A549 (cell line): ENCODE measurements at regions of chr19 and their contacts with region 1.

Region 1: GRCh38 chr19:49877020-49877878 is at the starts of genes AKT1S1 and TBC1D17:
- DNase-seq: peak; percentile 100
- ATAC-seq: peak; percentile 66 to 82
- H3K4me3 ChIP-seq: peak within 1 kb of the TSS; percentile 95
- H3K27ac ChIP-seq: peak within 1 kb of the TSS; percentile 98 to 99
- H3K4me1 ChIP-seq: peaks cover 21% of the 10 kb centered on the region
- CTCF ChIP-seq: no peak
- EP300 ChIP-seq: no peak; a peak in 1 of 5 replicates
- POLR2A ChIP-seq: peak; percentile 70
- RAD21 ChIP-seq: no peak
- polyA plus RNA-seq, gene AKT1S1: 39.2 and 41.5 TPM in 2 replicates
- polyA plus RNA-seq, gene TBC1D17: 12.3 and 18.0 TPM in 2 replicates

Region 2: GRCh38 chr19:49850473-49851342 is 26.5 kb before region 1 on chr19 and contains the start of gene PTOV1:
- CTCF ChIA-PET with region 1: no interaction called
- POLR2A ChIA-PET with region 1: interaction called, 10 read pairs
- DNase-seq: peak; percentile 96 to 97
- ATAC-seq: peak; percentile 76 to 84
- H3K4me3 ChIP-seq: peak within 1 kb of the TSS; percentile 89
- H3K27ac ChIP-seq: peak within 1 kb of the TSS; percentile 94 to 97
- H3K4me1 ChIP-seq: peaks cover 17% of the 10 kb centered on the region
- CTCF ChIP-seq: no peak
- EP300 ChIP-seq: no peak
- POLR2A ChIP-seq: peak; percentile 44
- RAD21 ChIP-seq: no peak; a peak in 1 of 5 replicates
- polyA plus RNA-seq, gene PTOV1: 27.7 and 41.2 TPM in 2 replicates

Region 3: DNA sequence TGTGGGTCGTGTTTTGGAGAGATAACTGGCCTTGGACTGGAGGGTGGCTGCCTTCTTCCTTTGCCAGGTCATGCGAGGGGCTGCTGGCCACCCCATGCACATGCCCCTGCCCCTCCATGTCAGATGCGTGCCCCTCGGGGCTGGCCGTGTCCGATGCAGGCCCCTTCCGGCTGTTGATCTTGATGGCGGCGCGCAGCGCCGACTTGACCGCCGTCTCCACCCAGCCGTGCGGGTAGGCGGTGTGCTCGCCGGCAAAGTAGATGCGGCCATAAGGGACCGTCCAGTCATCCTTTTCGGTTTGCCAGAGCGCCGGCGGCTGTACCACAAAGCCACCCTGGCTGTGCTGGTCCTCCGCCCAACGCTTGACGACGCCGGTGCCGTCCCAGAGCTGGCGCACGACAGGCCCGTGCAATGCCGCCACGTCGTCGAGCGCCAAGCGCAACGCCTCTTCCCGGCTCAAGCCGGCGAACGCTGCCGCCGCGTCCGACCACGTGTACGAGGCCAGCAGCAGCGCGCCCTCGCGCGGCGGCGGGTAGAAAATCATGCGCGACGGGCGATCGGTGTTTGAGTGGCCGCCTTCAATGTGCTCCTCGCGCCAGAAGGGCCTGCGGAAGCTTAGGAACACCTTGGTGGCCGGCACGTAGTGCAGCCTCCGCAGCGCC is 12.6 kb after region 1 on chr19:
- CTCF ChIA-PET with region 1: interaction called, 24 read pairs
- POLR2A ChIA-PET with region 1: interaction called, 9 read pairs
- DNase-seq: peak; percentile 61 to 94
- ATAC-seq: peak; percentile 55 to 79
- H3K4me3 ChIP-seq: peak overlapping the region; percentile 44
- H3K27ac ChIP-seq: peak overlapping the region; percentile 26 to 72; a peak in 5 of 6 replicates
- H3K4me1 ChIP-seq: peaks cover 6% of the 10 kb centered on the region; the same call in 1 of the 3 replicates
- CTCF ChIP-seq: peak; percentile 88
- EP300 ChIP-seq: no peak
- POLR2A ChIP-seq: no peak
- RAD21 ChIP-seq: peak; percentile 42 to 51; a peak in 3 of 5 replicates

Region 4: DNA sequence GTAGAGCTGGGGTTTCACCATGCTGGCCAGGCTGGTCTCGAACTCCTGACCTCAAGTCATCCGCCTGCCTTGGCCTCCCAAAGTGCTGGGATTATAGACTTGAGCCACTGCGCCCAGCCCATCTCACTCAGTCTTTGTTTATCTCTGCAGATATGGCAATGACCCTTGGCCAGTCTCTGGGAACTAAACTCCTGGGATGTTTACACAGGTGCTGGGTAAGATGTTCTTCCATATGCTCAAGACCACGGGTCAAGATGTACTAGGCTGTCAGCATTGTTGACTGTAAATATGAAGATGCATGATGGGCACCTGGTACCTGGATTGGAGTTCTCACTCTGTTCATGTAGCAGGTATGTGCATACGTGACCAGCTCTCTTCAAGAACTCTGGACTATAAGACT is 184.4 kb after region 1 on chr19:
- CTCF ChIA-PET with region 1: no interaction called
- POLR2A ChIA-PET with region 1: no interaction called
- DNase-seq: no peak
- ATAC-seq: no peak
- H3K4me3 ChIP-seq: no peak overlapping the region
- H3K27ac ChIP-seq: no peak overlapping the region
- H3K4me1 ChIP-seq: no peaks in the 10 kb centered on the region
- CTCF ChIP-seq: no peak
- EP300 ChIP-seq: no peak
- POLR2A ChIP-seq: no peak
- RAD21 ChIP-seq: no peak

Region 5: GRCh38 chr19:50266896-50267295 is 389.6 kb after region 1 on chr19:
- CTCF ChIA-PET with region 1: no interaction called
- POLR2A ChIA-PET with region 1: no interaction called
- DNase-seq: peak in 1 of 2 experiments; percentile 36
- ATAC-seq: peak; percentile 32 to 57; a peak in 4 of 6 replicates
- H3K4me3 ChIP-seq: no peak overlapping the region
- H3K27ac ChIP-seq: no peak overlapping the region
- H3K4me1 ChIP-seq: no peaks in the 10 kb centered on the region
- CTCF ChIP-seq: no peak
- EP300 ChIP-seq: no peak
- POLR2A ChIP-seq: no peak
- RAD21 ChIP-seq: no peak